ENCODE measurements at regions of chr3 and their contacts with region 1.

Region 1: DNA sequence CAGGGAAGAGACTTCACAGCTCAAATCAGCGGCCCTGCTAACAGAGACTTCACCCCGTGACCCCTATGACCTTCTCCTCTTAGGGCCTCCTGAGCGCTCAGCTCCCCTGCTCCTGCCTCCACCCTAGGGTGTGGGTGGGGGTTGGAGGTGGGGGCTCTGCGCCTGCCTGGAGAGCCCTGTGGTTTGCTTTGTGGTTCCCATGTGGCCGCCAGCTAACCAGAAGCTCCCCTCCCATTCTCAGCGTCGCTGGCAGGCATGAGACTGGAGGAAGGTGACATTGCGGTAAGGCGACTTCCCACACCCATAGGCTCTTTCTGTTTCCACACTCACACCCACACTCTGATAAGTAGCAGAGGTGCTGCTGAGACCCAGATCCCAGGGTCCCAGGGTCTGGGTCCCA is 27.6 kb downstream of the XYLB start:
- DNase-seq: peak in 6 of 9 donors; percentile 4 to 63 (median 30)
- ATAC-seq: peak; percentile 60
- H3K4me3 ChIP-seq: peak overlapping the region; percentile 1
- H3K4me3 Mint-ChIP-seq: peak overlapping the region; percentile 65 to 83 (median 78)
- H3K27ac ChIP-seq: no peak overlapping the region
- H3K27ac Mint-ChIP-seq: peak overlapping the region in 8 of 9 donors; percentile 48 to 86 (median 72)
- H3K4me1 ChIP-seq: peaks cover 19 to 24% of the 10 kb centered on the region in 2 donors
- H3K4me1 Mint-ChIP-seq: peaks cover 27 to 41% (median 30%) of the 10 kb centered on the region in 7 donors
- H3K27me3 ChIP-seq: no peaks in the 10 kb centered on the region
- H3K27me3 Mint-ChIP-seq: peaks cover 0 to 4% (median 0%) of the 10 kb centered on the region in 5 donors

Region 2: DNA sequence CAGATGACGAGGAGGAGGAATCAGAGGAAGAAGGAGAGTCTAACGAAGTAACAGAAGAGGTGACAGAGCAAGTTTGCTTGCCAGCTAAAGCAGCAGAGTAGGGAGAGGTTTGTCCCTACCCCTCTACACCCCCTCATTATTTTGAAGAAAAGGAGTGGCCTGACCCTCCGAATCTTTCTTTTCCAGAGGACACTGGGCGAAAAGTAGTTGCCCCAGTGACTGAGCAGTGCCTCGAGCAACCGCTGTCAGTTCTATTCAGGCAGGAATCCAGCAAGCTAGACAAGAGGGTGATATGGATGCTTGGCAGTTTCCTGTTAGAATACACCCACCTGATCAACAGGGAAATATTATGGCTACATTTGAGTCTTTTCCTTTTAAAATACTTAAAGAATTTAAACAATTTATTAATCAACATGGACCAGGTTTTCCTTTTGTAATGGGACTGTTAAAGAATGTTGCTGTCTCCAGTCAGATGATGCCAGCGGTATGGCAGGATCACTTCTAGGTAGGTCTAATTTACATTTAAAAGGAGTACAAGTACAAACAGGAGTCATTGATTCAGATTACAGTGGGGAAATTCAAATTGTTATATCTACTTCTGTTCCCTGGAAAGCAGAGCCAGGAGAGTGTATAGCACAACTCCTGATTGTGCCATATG is 47.6 kb after region 1 on chr3:
- CTCF ChIA-PET with region 1: no interaction called
- POLR2A ChIA-PET with region 1: no interaction called
- intact Hi-C with region 1: loop called (anchors 5 to 10 kb)
- DNase-seq: no peak
- ATAC-seq: no peak
- H3K4me3 ChIP-seq: no peak overlapping the region
- H3K4me3 Mint-ChIP-seq: peak overlapping the region in 9 of 10 donors; percentile 15 to 87 (median 62)
- H3K27ac ChIP-seq: peak overlapping the region; percentile 16
- H3K27ac Mint-ChIP-seq: peak overlapping the region in 6 of 9 donors; percentile 51 to 95 (median 79)
- H3K4me1 ChIP-seq: peaks cover 8 to 25% of the 10 kb centered on the region in 2 donors
- H3K4me1 Mint-ChIP-seq: peaks cover 8 to 56% (median 42%) of the 10 kb centered on the region in 7 donors
- H3K27me3 ChIP-seq: no peaks in the 10 kb centered on the region
- H3K27me3 Mint-ChIP-seq: peaks cover 0 to under 1% (median 0%) of the 10 kb centered on the region in 5 donors

Measured in naive thymus-derived CD4-positive, alpha-beta T cell (primary cell).